ENCODE measurements at regions of chr2 and their contacts with region 1.

Region 1: GRCh38 chr2:156541229-156541628 is 105.0 kb downstream of the GPD2 start:
- DNase-seq: no peak
- ATAC-seq: no peak
- H3K4me3 ChIP-seq: no peak overlapping the region
- H3K27ac ChIP-seq: no peak overlapping the region
- H3K4me1 ChIP-seq: peaks cover 7% of the 10 kb centered on the region
- H3K27me3 ChIP-seq: no peaks in the 10 kb centered on the region
- CTCF ChIP-seq: no peak
- POLR2A ChIP-seq: no peak
- RAD21 ChIP-seq: no peak

Region 2: DNA sequence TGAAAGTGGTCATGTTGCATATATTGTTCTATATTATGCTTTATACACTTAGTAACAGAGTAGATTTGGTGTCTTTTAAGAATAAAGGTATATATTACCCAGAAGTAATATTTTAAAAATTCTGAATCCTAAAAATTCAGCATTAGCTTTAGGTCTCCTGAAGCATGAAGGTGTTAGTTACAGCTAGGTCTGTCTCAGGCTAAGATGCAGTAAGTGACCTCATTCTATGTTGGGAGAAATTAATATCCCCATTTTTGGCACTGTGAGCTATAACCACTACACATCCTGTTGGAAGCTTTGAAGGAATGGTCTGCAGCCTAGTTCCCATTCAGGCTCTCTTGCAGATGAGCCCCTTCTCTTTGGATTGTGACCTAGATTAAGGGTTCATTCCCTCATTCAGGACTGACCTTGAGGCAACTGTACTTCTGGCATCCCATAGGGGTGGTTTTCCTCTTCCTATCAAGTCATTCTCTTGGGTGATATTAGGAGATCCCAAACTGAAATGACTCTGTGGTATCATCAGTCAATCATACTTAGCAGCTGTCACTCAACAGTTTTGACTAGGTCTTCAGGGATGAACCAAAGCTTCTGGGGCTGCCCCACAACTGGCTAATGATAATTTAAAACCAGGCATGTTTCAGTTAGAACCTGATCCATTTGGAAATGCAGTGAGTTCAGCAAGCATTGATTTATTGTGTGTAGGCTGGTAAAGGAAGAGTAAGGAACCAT is 12.6 kb after region 1 on chr2:
- CTCF ChIA-PET with region 1: no interaction called
- POLR2A ChIA-PET with region 1: interaction called, 13 read pairs
- dilution Hi-C with region 1: no loop called
- in situ Hi-C with region 1: no loop called
- intact Hi-C with region 1: no loop called
- DNase-seq: no peak
- ATAC-seq: no peak
- H3K4me3 ChIP-seq: no peak overlapping the region
- H3K27ac ChIP-seq: no peak overlapping the region
- H3K4me1 ChIP-seq: no peaks in the 10 kb centered on the region
- H3K27me3 ChIP-seq: no peaks in the 10 kb centered on the region
- CTCF ChIP-seq: no peak
- POLR2A ChIP-seq: no peak
- RAD21 ChIP-seq: no peak

Measured in IMR-90 (cell line).